CD8-positive, alpha-beta T cell (primary cell): ENCODE measurements at regions of chr7 and their contacts with region 1.

Region 1: DNA sequence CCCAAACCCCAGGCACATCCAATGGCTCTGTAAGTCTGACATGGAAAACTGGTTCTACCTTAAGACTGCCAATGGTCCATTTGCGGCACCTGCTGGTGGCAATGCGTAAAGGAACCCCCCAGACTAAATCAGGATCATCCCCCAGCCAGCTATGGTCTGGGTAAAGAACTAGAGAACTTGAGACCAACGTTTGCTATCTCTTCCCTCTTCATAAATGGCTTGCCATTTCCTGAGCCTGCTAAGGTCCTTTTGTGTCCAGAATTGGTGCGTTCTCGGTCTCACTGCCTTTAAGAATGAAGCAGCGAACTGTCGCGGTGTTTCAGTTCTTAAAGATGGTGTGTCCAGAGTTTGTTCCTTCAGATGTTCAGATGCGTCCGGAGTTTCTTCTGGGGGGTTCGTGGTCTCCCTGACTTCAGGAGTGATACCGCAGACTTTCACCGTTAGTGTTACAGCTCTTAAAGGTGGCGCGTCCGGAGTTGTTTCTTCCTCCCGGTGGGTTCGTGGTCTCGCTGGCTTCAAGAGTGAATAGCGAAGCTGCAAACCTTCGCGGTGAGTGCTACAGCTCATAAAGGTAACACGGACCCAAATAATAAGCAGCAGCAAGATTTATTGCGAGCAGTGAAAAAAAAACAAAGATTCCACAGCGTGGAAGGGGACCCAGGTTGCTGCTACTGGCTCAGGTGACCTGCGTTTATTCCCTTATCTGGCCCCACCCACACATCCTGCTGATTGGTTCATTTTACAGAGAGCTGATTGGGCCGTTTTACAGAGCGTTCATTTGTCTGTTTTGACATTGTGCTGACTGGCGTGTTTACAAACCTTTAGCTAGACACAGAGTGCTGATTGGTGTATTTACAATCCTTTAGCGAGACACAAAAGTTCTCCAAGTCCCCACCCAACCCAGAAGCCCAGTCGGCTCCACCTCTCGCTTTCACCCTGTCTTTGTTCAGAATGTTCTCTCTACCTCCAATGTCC is 95.4 kb downstream of the ELMO1 start:
- DNase-seq: peak; percentile 36 to 88 (median 68)
- ATAC-seq: peak; percentile 87
- H3K4me3 ChIP-seq: peak overlapping the region; percentile 64 to 75
- H3K4me3 Mint-ChIP-seq: peak overlapping the region; percentile 95
- H3K27ac ChIP-seq: peak overlapping the region; percentile 50 to 59
- H3K27ac Mint-ChIP-seq: peak overlapping the region; percentile 94
- H3K4me1 ChIP-seq: peaks cover 28% of the 10 kb centered on the region
- H3K4me1 Mint-ChIP-seq: peaks cover 75% of the 10 kb centered on the region
- H3K27me3 ChIP-seq: no peaks in the 10 kb centered on the region
- H3K27me3 Mint-ChIP-seq: no peaks in the 10 kb centered on the region
- CTCF ChIP-seq: peak; percentile 89

Region 2: GRCh38 chr7:36152756-36153570 is 1200.3 kb before region 1 on chr7 and contains the start of gene EEPD1:
- CTCF ChIA-PET with region 1: no interaction called
- POLR2A ChIA-PET with region 1: no interaction called
- intact Hi-C with region 1: loop called (anchors 5 to 10 kb)
- DNase-seq: peak; percentile 98 to 100 (median 100)
- ATAC-seq: peak; percentile 94
- H3K4me3 ChIP-seq: peak within 1 kb of the TSS; percentile 60 to 73
- H3K4me3 Mint-ChIP-seq: peak within 1 kb of the TSS; percentile 87
- H3K27ac ChIP-seq: peak within 1 kb of the TSS; percentile 35 to 54
- H3K27ac Mint-ChIP-seq: peak within 1 kb of the TSS; percentile 25
- H3K4me1 ChIP-seq: peaks cover 12% of the 10 kb centered on the region
- H3K4me1 Mint-ChIP-seq: peaks cover 24% of the 10 kb centered on the region
- H3K27me3 ChIP-seq: no peaks in the 10 kb centered on the region
- H3K27me3 Mint-ChIP-seq: no peaks in the 10 kb centered on the region
- CTCF ChIP-seq: no peak
- total RNA-seq, gene EEPD1: 0.98 to 1.1 TPM

Region 3: GRCh38 chr7:36487756-36488336 is 865.4 kb before region 1 on chr7:
- CTCF ChIA-PET with region 1: no interaction called
- POLR2A ChIA-PET with region 1: no interaction called
- intact Hi-C with region 1: loop called in 1 of 2 experiments (anchors 10 kb)
- DNase-seq: peak in 5 of 9 experiments; percentile 9 to 77 (median 35)
- ATAC-seq: peak; percentile 89
- H3K4me3 ChIP-seq: no peak overlapping the region
- H3K4me3 Mint-ChIP-seq: no peak overlapping the region
- H3K27ac ChIP-seq: no peak overlapping the region
- H3K27ac Mint-ChIP-seq: no peak overlapping the region
- H3K4me1 ChIP-seq: no peaks in the 10 kb centered on the region
- H3K4me1 Mint-ChIP-seq: peaks cover 2% of the 10 kb centered on the region
- H3K27me3 ChIP-seq: no peaks in the 10 kb centered on the region
- H3K27me3 Mint-ChIP-seq: peaks cover 2% of the 10 kb centered on the region
- CTCF ChIP-seq: peak; percentile 87

Region 4: GRCh38 chr7:37208528-37208927 is 144.7 kb before region 1 on chr7:
- CTCF ChIA-PET with region 1: interaction called, 4 read pairs
- POLR2A ChIA-PET with region 1: no interaction called
- intact Hi-C with region 1: loop called (anchors 1 to 10 kb)
- DNase-seq: peak in 5 of 9 experiments; percentile 31 to 56 (median 44)
- ATAC-seq: peak; percentile 54
- H3K4me3 ChIP-seq: no peak overlapping the region
- H3K4me3 Mint-ChIP-seq: no peak overlapping the region
- H3K27ac ChIP-seq: no peak overlapping the region
- H3K27ac Mint-ChIP-seq: peak overlapping the region; percentile 8
- H3K4me1 ChIP-seq: no peaks in the 10 kb centered on the region
- H3K4me1 Mint-ChIP-seq: no peaks in the 10 kb centered on the region
- H3K27me3 ChIP-seq: no peaks in the 10 kb centered on the region
- H3K27me3 Mint-ChIP-seq: no peaks in the 10 kb centered on the region
- CTCF ChIP-seq: no peak

Region 5: GRCh38 chr7:37342688-37343471 is 10.4 kb before region 1 on chr7:
- CTCF ChIA-PET with region 1: interaction called, 8 read pairs
- POLR2A ChIA-PET with region 1: interaction called, 5 read pairs
- intact Hi-C with region 1: loop called (anchors 1 kb)
- DNase-seq: peak; percentile 48 to 87 (median 73)
- ATAC-seq: peak; percentile 91
- H3K4me3 ChIP-seq: peak overlapping the region; percentile 53 to 64
- H3K4me3 Mint-ChIP-seq: peak overlapping the region; percentile 93
- H3K27ac ChIP-seq: peak overlapping the region; percentile 69 to 72
- H3K27ac Mint-ChIP-seq: peak overlapping the region; percentile 97
- H3K4me1 ChIP-seq: peaks cover 39% of the 10 kb centered on the region
- H3K4me1 Mint-ChIP-seq: peaks cover 69% of the 10 kb centered on the region
- H3K27me3 ChIP-seq: no peaks in the 10 kb centered on the region
- H3K27me3 Mint-ChIP-seq: no peaks in the 10 kb centered on the region
- CTCF ChIP-seq: peak; percentile 43

Region 6: GRCh38 chr7:37395618-37396259 is 42.5 kb after region 1 on chr7:
- CTCF ChIA-PET with region 1: no interaction called
- POLR2A ChIA-PET with region 1: no interaction called
- intact Hi-C with region 1: no loop called
- DNase-seq: no peak
- ATAC-seq: no peak
- H3K4me3 ChIP-seq: no peak overlapping the region
- H3K4me3 Mint-ChIP-seq: no peak overlapping the region
- H3K27ac ChIP-seq: no peak overlapping the region
- H3K27ac Mint-ChIP-seq: peak overlapping the region; percentile 2
- H3K4me1 ChIP-seq: peaks cover 4% of the 10 kb centered on the region
- H3K4me1 Mint-ChIP-seq: peaks cover 74% of the 10 kb centered on the region
- H3K27me3 ChIP-seq: no peaks in the 10 kb centered on the region
- H3K27me3 Mint-ChIP-seq: no peaks in the 10 kb centered on the region
- CTCF ChIP-seq: no peak

Region 7: GRCh38 chr7:37495574-37496184 is 142.4 kb after region 1 on chr7:
- CTCF ChIA-PET with region 1: interaction called, 8 read pairs
- POLR2A ChIA-PET with region 1: no interaction called
- intact Hi-C with region 1: loop called (anchors 1 to 5 kb)
- DNase-seq: peak in 2 of 9 experiments; percentile 42 to 53
- ATAC-seq: peak; percentile 56
- H3K4me3 ChIP-seq: no peak overlapping the region
- H3K4me3 Mint-ChIP-seq: no peak overlapping the region
- H3K27ac ChIP-seq: no peak overlapping the region
- H3K27ac Mint-ChIP-seq: no peak overlapping the region
- H3K4me1 ChIP-seq: no peaks in the 10 kb centered on the region
- H3K4me1 Mint-ChIP-seq: no peaks in the 10 kb centered on the region
- H3K27me3 ChIP-seq: peaks cover 0 to 2% of the 10 kb centered on the region in 2 experiments
- H3K27me3 Mint-ChIP-seq: no peaks in the 10 kb centered on the region
- CTCF ChIP-seq: peak; percentile 93